ENCODE measurements at regions of chr11 and their contacts with region 1.

Region 1: GRCh38 chr11:119334174-119334930 is at the start of gene RNF26:
- DNase-seq: peak; percentile 98
- ATAC-seq: peak; percentile 95
- H3K4me3 Mint-ChIP-seq: peak within 1 kb of the TSS; percentile 93
- H3K27ac Mint-ChIP-seq: peak within 1 kb of the TSS; percentile 96
- H3K4me1 Mint-ChIP-seq: peaks cover 48% of the 10 kb centered on the region
- H3K27me3 Mint-ChIP-seq: peaks cover 20% of the 10 kb centered on the region
- total RNA-seq, gene RNF26: 38.7 to 42.1 TPM

Region 2: GRCh38 chr11:119153049-119153818 is 181.1 kb before region 1 on chr11:
- CTCF ChIA-PET with region 1: interaction called, 10 read pairs
- DNase-seq: no peak
- ATAC-seq: no peak
- H3K4me3 Mint-ChIP-seq: no peak overlapping the region
- H3K27ac Mint-ChIP-seq: no peak overlapping the region
- H3K4me1 Mint-ChIP-seq: peaks cover 11% of the 10 kb centered on the region
- H3K27me3 Mint-ChIP-seq: peaks cover 60% of the 10 kb centered on the region

Region 3: GRCh38 chr11:119262668-119263351 is 71.5 kb before region 1 on chr11:
- CTCF ChIA-PET with region 1: interaction called, 13 read pairs
- DNase-seq: peak; percentile 45
- ATAC-seq: peak; percentile 82
- H3K4me3 Mint-ChIP-seq: no peak overlapping the region
- H3K27ac Mint-ChIP-seq: no peak overlapping the region
- H3K4me1 Mint-ChIP-seq: peaks cover 57% of the 10 kb centered on the region
- H3K27me3 Mint-ChIP-seq: no peaks in the 10 kb centered on the region

Region 4: GRCh38 chr11:119356349-119357031 is 22.1 kb after region 1 on chr11:
- CTCF ChIA-PET with region 1: interaction called, 126 read pairs
- DNase-seq: peak; percentile 84
- ATAC-seq: peak; percentile 95
- H3K4me3 Mint-ChIP-seq: peak overlapping the region; percentile 77
- H3K27ac Mint-ChIP-seq: peak overlapping the region; percentile 60
- H3K4me1 Mint-ChIP-seq: peaks cover 25% of the 10 kb centered on the region
- H3K27me3 Mint-ChIP-seq: peaks cover 40% of the 10 kb centered on the region

Region 5: GRCh38 chr11:119367661-119368120 is 33.3 kb after region 1 on chr11:
- CTCF ChIA-PET with region 1: no interaction called
- DNase-seq: no peak
- ATAC-seq: no peak
- H3K4me3 Mint-ChIP-seq: no peak overlapping the region
- H3K27ac Mint-ChIP-seq: no peak overlapping the region
- H3K4me1 Mint-ChIP-seq: peaks cover 15% of the 10 kb centered on the region
- H3K27me3 Mint-ChIP-seq: peaks cover 48% of the 10 kb centered on the region

Region 6: DNA sequence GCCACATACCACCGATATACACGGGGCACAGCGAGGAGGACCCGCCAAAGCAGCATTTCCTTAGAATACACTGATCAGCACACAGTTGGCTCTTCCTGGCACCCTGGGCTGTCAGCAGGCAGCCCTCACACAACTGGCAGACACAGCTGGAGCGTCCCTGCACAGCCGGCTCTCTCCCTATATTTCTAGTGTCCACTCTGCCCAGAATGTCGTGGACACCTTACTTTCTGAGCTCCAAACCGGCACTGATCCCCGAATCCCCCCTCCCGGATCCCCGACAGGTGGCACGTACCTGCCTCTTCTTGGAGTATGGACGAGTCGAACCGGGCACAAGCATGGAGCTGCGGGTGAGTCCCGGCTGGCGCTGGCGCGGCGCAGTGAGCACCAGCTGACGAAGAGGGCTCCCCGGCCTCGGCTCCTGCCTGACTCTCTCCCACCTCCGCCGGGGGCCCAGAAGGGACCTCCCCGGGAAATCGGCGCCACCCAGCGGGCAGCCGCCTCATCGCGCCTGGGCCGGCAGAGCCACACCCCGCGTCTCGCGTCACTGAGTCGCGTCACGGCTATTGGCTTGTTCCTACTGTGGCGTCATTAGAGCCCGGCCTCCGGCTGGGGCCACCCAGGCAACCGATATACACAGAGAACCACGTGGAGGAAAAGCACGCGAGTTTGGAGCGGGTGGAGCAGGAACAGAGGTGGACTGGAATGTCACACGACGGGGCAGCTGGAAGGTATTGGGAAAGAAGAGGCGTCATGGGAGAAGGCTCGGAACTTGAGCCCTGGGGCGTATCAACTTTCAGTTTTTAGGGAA is 47.0 kb after region 1 on chr11 and contains the start of gene USP2:
- CTCF ChIA-PET with region 1: interaction called, 54 read pairs
- DNase-seq: peak; percentile 96
- ATAC-seq: peak; percentile 98
- H3K4me3 Mint-ChIP-seq: no peak within 1 kb of the TSS
- H3K27ac Mint-ChIP-seq: no peak within 1 kb of the TSS
- H3K4me1 Mint-ChIP-seq: peaks cover 9% of the 10 kb centered on the region
- H3K27me3 Mint-ChIP-seq: peaks cover 7% of the 10 kb centered on the region
- total RNA-seq, gene USP2: 0.28 to 0.76 TPM